Esophagus muscularis mucosa (tissue), 4 donors: ENCODE measurements at regions of chr1 and their contacts with region 1.

Region 1: DNA sequence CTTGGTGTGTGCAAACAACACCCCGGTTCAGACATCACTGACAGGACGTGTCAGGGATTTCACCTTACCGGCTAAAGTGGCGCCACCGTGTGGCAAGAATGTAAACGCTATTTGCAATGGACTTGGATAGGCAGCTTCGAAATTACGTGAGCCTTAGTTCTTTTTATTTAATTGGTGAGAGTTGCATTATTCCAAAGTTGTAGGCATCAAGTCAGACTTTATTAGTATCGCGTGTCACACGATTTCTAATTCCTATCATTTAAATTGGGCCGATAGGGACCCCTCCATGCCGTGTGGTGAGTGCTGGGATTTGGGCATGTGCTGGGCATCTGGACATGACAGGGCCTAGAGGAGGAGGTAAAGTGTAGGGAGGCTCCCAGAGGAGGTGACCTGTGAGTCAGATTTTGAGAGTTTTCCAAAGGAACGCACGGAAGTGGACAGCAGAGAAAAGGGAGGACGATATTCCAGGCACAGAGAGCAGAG is 14.5 kb upstream of the CPT2 start:
- DNase-seq: no peak
- H3K4me3 ChIP-seq: no peak overlapping the region
- H3K27ac ChIP-seq: peak overlapping the region in 3 of 4 donors; percentile 14 to 45 (median 33)
- H3K4me1 ChIP-seq: peaks cover 0 to 15% (median 9%) of the 10 kb centered on the region in 4 donors
- H3K27me3 ChIP-seq: no peaks in the 10 kb centered on the region
- CTCF ChIP-seq: peak; percentile 74 to 85 (median 77)
- EP300 ChIP-seq: no peak
- POLR2A ChIP-seq: no peak

Region 2: GRCh38 chr1:52927212-52928014 is 254.7 kb before region 1 on chr1 and contains the start of gene SCP2:
- intact Hi-C with region 1: loop called (anchors 10 kb)
- DNase-seq: no peak
- H3K4me3 ChIP-seq: peak within 1 kb of the TSS; percentile 66 to 79 (median 69)
- H3K27ac ChIP-seq: peak within 1 kb of the TSS; percentile 77 to 82 (median 80)
- H3K4me1 ChIP-seq: peaks cover 22 to 30% (median 25%) of the 10 kb centered on the region in 4 donors
- H3K27me3 ChIP-seq: no peaks in the 10 kb centered on the region
- CTCF ChIP-seq: no peak
- EP300 ChIP-seq: no peak
- POLR2A ChIP-seq: peak; percentile 44
- total RNA-seq, gene SCP2: 83.0 to 94.3 (median 92.1) TPM

Region 3: DNA sequence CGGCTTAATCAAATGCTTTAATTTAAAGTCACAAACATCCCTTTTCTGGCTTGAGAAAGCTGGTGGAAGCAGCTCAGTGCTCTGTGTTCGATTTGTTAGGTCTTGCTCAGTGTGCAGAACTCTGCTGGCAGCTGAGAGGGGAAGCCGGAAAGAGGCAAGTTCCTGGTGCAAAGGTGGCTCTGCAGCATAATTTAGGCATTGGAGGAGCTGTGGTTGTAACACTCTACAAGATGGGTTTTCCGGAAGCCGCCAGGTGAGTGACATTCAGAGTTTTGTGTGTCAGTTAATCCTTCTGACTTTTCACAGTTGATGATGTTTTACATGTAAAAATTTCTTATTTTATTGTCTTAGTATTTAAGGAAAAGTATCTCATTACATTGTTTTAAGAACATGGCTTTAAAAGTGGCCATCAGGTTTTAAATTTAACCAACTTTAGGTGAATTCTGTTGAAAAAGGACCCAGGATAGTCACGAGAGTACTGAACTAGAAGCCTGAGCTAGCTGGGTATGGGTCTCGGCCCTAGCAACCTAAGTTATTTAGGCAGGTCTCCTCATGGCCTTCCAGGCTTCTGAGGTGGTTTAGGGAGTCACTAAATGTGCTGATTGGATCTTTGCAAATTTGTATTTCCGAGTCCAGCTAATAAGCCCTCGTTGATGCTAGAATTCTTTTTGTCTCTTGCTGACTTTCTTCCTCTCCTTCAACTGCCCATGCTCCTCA is 167.2 kb before region 1 on chr1:
- intact Hi-C with region 1: loop called (anchors 10 kb)
- DNase-seq: no peak
- H3K4me3 ChIP-seq: peak overlapping the region; percentile 53 to 63 (median 56)
- H3K27ac ChIP-seq: peak overlapping the region; percentile 32 to 62 (median 50)
- H3K4me1 ChIP-seq: peaks cover 13 to 23% (median 23%) of the 10 kb centered on the region in 4 donors
- H3K27me3 ChIP-seq: no peaks in the 10 kb centered on the region
- CTCF ChIP-seq: no peak
- EP300 ChIP-seq: no peak
- POLR2A ChIP-seq: no peak

Region 4: DNA sequence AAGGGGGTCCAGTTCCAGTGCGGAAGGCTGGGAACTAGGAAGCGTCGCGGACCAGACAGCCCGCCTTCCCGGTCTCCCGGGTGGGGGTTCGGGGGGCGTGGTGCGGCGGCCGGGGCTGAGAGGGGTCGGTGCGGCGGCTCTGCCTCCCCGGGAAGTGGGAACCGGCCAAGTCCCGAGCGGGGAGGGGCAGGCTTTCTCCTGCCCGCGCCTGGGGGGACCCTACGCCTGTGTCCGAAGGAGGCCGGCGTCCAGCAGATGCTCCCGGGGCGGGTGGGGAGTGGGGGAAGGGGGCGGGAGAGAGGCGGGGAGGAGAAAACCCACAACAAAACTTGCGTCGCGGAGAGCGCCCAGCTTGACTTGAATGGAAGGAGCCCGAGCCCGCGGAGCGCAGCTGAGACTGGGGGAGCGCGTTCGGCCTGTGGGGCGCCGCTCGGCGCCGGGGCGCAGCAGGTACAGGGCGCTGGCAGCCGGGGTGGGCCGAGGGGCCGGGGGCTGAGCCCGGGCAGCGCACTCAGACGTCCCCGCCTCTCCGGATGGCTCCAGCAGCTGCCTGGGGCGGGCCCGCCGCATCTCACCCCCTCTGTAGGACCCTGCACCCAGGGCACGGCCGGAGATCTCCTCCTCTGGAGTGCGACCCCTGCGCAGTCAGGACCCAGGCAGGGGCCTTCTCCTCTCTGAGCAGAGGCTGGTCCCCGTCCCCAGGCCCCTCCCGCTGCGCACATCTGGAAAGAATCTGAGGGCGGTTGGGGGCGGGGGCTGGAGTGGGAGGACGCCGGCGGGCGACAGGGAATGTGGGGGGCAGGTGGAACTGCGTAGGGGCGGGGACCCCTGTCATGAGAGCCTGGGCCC is 120.1 kb before region 1 on chr1 and contains the start of gene PODN:
- intact Hi-C with region 1: loop called (anchors 10 kb)
- DNase-seq: peak; percentile 92
- H3K4me3 ChIP-seq: peak within 1 kb of the TSS; percentile 56 to 78 (median 65)
- H3K27ac ChIP-seq: peak within 1 kb of the TSS; percentile 73 to 79 (median 76)
- H3K4me1 ChIP-seq: peaks cover 15 to 40% (median 29%) of the 10 kb centered on the region in 4 donors
- H3K27me3 ChIP-seq: peaks cover 0 to 32% (median 12%) of the 10 kb centered on the region in 4 donors
- CTCF ChIP-seq: no peak
- EP300 ChIP-seq: no peak
- POLR2A ChIP-seq: no peak
- total RNA-seq, gene PODN: 78.6 to 150 (median 113) TPM